ENCODE measurements at regions of chr17 and their contacts with region 1.

Region 1: DNA sequence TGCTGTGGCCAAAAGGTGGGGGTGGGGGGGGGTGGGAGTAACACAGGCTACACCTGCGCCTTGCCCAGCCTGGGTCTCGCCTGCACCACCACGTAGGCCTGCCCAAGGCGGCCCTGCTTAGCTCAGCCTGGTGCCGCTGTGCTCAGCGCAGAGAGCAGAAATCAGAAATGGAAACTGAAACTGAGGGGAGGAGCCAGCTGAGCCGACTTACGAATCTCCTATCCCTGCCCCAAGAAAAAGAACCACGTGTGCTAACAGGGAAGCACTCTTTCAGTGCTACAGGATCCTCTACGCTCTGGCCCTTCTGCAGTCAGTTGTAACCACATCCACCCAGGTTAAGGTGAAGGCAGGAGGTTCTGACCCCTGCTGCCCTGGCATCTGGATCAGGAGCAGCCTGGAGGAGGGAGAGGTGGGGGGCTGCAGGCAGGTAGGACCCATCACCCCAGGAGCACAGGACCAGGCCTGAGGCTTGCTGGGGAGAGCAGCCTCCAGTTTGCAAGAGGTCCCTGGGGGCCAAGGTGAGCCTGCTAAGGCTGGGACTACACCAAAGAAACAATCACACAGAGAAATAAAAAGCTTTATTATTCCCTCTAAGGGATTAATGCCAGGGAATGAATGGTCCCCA is at the start of gene DHX58:
- DNase-seq: peak; percentile 89
- ATAC-seq: peak; percentile 82
- H3K4me3 Mint-ChIP-seq: peak within 1 kb of the TSS; percentile 79
- H3K27ac Mint-ChIP-seq: peak within 1 kb of the TSS; percentile 92
- H3K4me1 Mint-ChIP-seq: peaks cover 30% of the 10 kb centered on the region
- H3K27me3 Mint-ChIP-seq: no peaks in the 10 kb centered on the region
- CTCF ChIP-seq: no peak
- total RNA-seq, gene DHX58: 31.7 to 36.2 TPM

Region 2: DNA sequence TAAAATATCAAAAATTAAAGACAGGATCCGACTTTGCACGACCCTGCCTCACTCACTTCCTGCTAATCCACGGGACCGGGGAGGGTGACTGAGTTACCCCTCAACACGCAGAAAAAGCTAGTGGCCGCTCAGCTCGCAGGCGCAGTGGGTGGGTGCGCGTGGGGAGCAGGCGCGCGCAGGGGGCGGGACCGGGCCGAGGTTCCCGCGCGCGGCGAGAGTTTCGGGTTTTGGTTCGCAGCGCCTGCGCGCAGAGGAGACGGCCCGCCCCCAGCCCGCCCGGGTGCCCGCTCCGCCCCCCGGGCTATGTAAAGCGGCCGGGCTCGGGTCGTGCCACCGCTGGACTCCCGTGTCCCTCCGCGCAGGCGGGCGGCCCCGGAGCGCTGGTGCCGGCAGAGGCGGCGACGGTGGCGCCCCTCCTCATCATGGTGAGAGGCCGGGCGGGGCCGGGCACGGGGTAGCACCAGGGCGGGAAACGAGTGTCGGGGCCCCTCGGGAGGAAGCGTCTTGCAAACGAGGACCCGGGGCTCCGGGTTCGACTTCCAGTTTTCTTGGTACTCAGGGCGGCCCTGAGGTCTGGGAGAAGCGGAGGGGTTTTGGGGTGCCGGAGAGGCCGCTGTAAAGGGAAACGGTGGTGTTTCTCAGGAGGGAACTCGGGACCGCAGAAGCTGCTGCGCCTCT is 146.1 kb before region 1 on chr17 and contains the start of gene CNP:
- CTCF ChIA-PET with region 1: interaction called, 25 read pairs
- POLR2A ChIA-PET with region 1: interaction called, 8 read pairs
- intact Hi-C with region 1: loop called (anchors 5 kb)
- DNase-seq: peak; percentile 92
- ATAC-seq: peak; percentile 82
- H3K4me3 Mint-ChIP-seq: peak within 1 kb of the TSS; percentile 82
- H3K27ac Mint-ChIP-seq: peak within 1 kb of the TSS; percentile 88
- H3K4me1 Mint-ChIP-seq: peaks cover 38% of the 10 kb centered on the region
- H3K27me3 Mint-ChIP-seq: no peaks in the 10 kb centered on the region
- CTCF ChIP-seq: no peak
- total RNA-seq, gene CNP: 50.1 to 54.5 TPM

Region 3: GRCh38 chr17:42027961-42028790 is 84.5 kb before region 1 on chr17:
- CTCF ChIA-PET with region 1: interaction called, 49 read pairs
- POLR2A ChIA-PET with region 1: interaction called, 7 read pairs
- intact Hi-C with region 1: loop called (anchors 5 kb)
- DNase-seq: no peak
- ATAC-seq: no peak
- H3K4me3 Mint-ChIP-seq: no peak overlapping the region
- H3K27ac Mint-ChIP-seq: no peak overlapping the region
- H3K4me1 Mint-ChIP-seq: peaks cover 12% of the 10 kb centered on the region
- H3K27me3 Mint-ChIP-seq: peaks cover 5% of the 10 kb centered on the region
- CTCF ChIP-seq: no peak